ENCODE measurements at regions of chr20 and their contacts with region 1.

Region 1: DNA sequence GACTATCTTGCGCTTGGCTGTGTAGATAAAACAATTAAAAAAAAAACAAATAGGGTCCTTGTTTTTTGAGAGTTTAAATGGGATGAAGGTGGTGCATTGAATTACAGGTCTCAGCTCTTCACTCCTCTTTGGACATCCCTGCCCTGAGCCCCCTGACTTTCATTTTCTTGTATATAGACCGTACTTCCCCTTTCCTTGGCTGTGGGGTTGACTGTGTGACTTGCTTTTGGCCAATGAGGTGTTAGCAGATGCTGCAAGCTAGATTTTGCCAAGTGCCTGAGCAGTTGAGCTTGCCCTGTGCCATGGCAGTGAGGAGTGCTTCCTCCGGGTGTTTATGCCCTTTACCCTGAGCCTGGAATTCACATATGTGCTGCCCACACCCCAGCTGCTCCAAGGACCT is 386.1 kb upstream of the ZFP64 start:
- DNase-seq: no peak
- ATAC-seq: no peak
- H3K4me3 ChIP-seq: no peak overlapping the region
- H3K27ac ChIP-seq: no peak overlapping the region
- H3K4me1 ChIP-seq: no peaks in the 10 kb centered on the region
- H3K27me3 ChIP-seq: no peaks in the 10 kb centered on the region
- CTCF ChIP-seq: no peak

Region 2: DNA sequence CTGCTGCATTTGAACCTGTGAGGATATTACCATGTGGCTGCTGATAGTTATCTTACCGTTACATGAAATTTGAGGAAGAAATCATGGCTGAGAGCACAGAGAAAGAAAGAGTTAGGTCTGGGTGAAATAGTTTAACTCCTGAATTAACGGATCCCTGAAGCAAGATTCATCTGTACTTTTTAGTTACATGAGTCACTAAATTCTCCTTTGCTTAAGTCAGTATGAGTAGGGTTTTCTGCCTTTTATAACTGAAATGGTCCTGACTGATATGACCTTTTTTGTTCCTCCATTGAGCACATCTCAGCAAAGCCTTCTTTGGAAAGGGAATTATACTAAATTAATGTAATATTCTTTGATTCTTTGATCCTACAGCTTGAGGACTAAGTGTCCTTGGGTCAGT is 52.8 kb before region 1 on chr20:
- intact Hi-C with region 1: loop called in 1 of 10 experiments (anchors 2 kb)
- DNase-seq: no peak
- ATAC-seq: no peak
- H3K4me3 ChIP-seq: no peak overlapping the region
- H3K27ac ChIP-seq: no peak overlapping the region
- H3K4me1 ChIP-seq: no peaks in the 10 kb centered on the region
- H3K27me3 ChIP-seq: peaks cover 0 to 9% (median 0%) of the 10 kb centered on the region in 7 donors
- CTCF ChIP-seq: no peak

Region 3: DNA sequence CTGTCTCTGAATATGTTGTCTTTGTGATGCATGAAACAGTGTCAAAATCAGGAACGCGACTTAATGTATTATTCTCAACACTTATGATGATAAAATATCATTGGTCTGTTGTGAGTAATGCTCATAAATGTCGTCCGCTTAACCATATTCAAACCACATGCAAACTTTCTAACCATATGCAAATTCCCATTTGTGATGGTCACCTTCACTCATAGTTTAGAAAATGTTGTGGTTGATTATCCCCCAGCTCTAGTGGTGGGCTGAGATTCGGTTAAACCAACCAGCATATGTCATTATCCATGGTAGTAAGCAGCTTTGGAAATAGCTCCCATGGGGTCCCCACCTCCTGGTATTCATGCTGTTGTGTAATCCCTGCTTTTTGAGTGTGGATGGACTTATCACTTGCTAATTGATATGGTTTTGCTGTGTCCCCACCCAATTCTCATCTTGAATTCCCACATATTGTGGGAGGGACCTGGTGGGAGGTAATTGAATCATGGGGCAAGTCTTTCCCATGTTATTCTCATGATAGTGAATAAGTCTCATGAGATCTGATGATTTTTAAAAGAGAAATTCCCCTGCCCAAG is 34.4 kb after region 1 on chr20:
- intact Hi-C with region 1: no loop called
- DNase-seq: no peak
- ATAC-seq: no peak
- H3K4me3 ChIP-seq: no peak overlapping the region
- H3K27ac ChIP-seq: no peak overlapping the region
- H3K4me1 ChIP-seq: no peaks in the 10 kb centered on the region
- H3K27me3 ChIP-seq: peaks cover 0 to 15% (median 0%) of the 10 kb centered on the region in 7 donors
- CTCF ChIP-seq: no peak